CD8-positive, alpha-beta memory T cell (primary cell): ENCODE measurements at regions of chr11 and their contacts with region 1.

Region 1: GRCh38 chr11:66855574-66856495 is 1.0 kb upstream of the LRFN4 start:
- DNase-seq: peak in 4 of 5 donors; percentile 76 to 86 (median 80)
- H3K4me3 ChIP-seq: peak overlapping the region; percentile 66
- H3K4me3 Mint-ChIP-seq: peak overlapping the region; percentile 82 to 90 (median 88)
- H3K27ac ChIP-seq: peak overlapping the region; percentile 87
- H3K27ac Mint-ChIP-seq: peak overlapping the region; percentile 62 to 96 (median 82)
- H3K4me1 ChIP-seq: peaks cover 6% of the 10 kb centered on the region
- H3K4me1 Mint-ChIP-seq: peaks cover 6 to 7% (median 6%) of the 10 kb centered on the region in 3 donors
- H3K27me3 ChIP-seq: no peaks in the 10 kb centered on the region
- H3K27me3 Mint-ChIP-seq: peaks cover 0 to 1% of the 10 kb centered on the region in 2 donors

Region 2: GRCh38 chr11:66616379-66617154 is 239.3 kb before region 1 on chr11 and contains the start of gene RBM14:
- CTCF ChIA-PET with region 1: no interaction called
- POLR2A ChIA-PET with region 1: no interaction called
- DNase-seq: peak; percentile 97 to 99 (median 98)
- H3K4me3 ChIP-seq: peak within 1 kb of the TSS; percentile 99
- H3K4me3 Mint-ChIP-seq: peak within 1 kb of the TSS; percentile 97 to 99 (median 98)
- H3K27ac ChIP-seq: peak within 1 kb of the TSS; percentile 100
- H3K27ac Mint-ChIP-seq: peak within 1 kb of the TSS; percentile 97 to 100 (median 99)
- H3K4me1 ChIP-seq: peaks cover 41% of the 10 kb centered on the region
- H3K4me1 Mint-ChIP-seq: peaks cover 44 to 61% (median 47%) of the 10 kb centered on the region in 3 donors
- H3K27me3 ChIP-seq: no peaks in the 10 kb centered on the region
- H3K27me3 Mint-ChIP-seq: peaks cover 0 to 4% of the 10 kb centered on the region in 2 donors
- total RNA-seq, gene RBM14: 152 to 165 TPM

Region 3: DNA sequence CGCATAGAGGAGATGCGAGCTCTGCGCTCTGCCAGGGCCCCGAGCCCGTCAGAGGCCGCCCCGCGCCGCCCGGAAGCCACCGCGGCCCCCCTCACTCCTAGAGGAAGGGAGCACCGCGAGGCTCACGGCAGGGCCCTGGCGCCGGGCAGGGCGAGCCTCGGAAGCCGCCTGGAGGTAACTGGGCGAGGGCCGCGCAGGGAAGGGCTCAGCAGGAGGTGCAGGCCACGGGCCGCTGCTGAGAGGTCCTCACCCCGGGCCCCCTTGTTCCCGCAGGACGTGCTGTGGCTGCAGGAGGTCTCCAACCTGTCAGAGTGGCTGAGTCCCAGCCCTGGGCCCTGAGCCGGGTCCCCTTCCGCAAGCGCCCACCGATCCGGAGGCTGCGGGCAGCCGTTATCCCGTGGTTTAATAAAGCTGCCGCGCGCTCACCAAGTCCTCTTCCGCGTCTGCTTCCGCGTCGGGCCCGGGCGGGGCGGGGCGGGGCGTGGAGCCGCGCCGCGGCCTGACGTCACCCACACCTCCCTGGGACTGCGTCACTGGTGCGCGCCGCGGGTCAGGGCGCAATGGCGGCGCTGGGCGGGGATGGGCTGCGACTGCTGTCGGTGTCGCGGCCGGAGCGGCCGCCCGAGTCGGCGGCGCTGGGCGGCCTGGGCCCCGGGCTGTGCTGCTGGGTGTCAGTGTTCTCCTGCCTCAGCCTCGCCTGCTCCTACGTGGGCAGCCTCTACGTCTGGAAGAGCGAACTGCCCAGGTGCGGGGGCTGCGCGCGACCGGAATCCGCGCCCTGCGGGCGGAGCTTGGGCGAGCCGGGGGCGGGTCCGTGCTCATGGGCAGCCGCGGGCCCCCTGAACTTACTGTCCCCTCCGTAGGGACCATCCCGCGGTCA is 12.7 kb before region 1 on chr11 and contains the start of gene RCE1:
- CTCF ChIA-PET with region 1: interaction called, 5 read pairs
- POLR2A ChIA-PET with region 1: interaction called, 45 read pairs
- DNase-seq: peak; percentile 87 to 94 (median 89)
- H3K4me3 ChIP-seq: peak within 1 kb of the TSS; percentile 91
- H3K4me3 Mint-ChIP-seq: peak within 1 kb of the TSS; percentile 82 to 98 (median 92)
- H3K27ac ChIP-seq: peak within 1 kb of the TSS; percentile 98
- H3K27ac Mint-ChIP-seq: peak within 1 kb of the TSS; percentile 96 to 99 (median 97)
- H3K4me1 ChIP-seq: peaks cover 44% of the 10 kb centered on the region
- H3K4me1 Mint-ChIP-seq: peaks cover 42 to 59% (median 44%) of the 10 kb centered on the region in 3 donors
- H3K27me3 ChIP-seq: no peaks in the 10 kb centered on the region
- H3K27me3 Mint-ChIP-seq: peaks cover 0 to 1% of the 10 kb centered on the region in 2 donors
- total RNA-seq, gene RCE1: 34.1 to 41.2 TPM